ENCODE measurements at regions of chr13 and their contacts with region 1.

Region 1: DNA sequence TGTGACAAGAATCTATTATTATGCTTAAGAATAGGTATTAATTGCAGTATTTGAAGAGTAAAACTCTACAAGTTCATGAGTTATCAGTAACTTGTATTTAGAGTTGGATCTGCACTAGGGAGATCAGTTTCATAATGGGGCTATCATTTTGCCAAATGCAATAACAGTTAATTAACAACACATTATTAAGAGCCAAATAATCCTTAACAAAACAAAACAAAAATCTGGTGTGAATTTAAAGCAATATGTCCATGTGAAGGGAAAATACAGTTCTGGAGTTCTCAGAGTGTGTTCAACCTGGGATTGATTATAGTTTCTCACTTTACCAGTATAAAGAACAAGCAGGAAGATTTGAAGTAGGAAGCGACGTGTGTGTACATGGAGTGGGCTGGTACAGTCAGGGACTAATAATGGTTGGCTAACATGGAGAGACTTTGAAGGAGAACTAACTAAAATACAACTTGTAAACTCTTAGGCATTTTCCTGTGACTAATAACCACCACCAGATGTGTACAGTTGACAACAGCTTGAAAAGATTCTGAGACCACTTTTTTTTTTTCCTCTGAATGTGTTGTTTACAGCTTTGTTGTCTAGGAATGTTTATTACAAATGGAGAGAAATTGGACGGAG is 58.5 kb downstream of the POSTN start:
- DNase-seq: no peak
- H3K4me3 ChIP-seq: no peak overlapping the region
- CTCF ChIP-seq: no peak
- POLR2A ChIP-seq: no peak

Region 2: GRCh38 chr13:37257706-37258105 is 282.4 kb before region 1 on chr13:
- intact Hi-C with region 1: no loop called
- DNase-seq: no peak
- H3K4me3 ChIP-seq: no peak overlapping the region
- CTCF ChIP-seq: no peak
- POLR2A ChIP-seq: no peak

Region 3: GRCh38 chr13:38979891-38980749 is 1440.0 kb after region 1 on chr13:
- intact Hi-C with region 1: loop called (anchors 5 kb)
- DNase-seq: no peak
- H3K4me3 ChIP-seq: no peak overlapping the region
- CTCF ChIP-seq: no peak
- POLR2A ChIP-seq: no peak

Measured in lower leg skin (tissue), 4 donors.